ENCODE measurements at regions of chr1 and their contacts with region 1.

Region 1: DNA sequence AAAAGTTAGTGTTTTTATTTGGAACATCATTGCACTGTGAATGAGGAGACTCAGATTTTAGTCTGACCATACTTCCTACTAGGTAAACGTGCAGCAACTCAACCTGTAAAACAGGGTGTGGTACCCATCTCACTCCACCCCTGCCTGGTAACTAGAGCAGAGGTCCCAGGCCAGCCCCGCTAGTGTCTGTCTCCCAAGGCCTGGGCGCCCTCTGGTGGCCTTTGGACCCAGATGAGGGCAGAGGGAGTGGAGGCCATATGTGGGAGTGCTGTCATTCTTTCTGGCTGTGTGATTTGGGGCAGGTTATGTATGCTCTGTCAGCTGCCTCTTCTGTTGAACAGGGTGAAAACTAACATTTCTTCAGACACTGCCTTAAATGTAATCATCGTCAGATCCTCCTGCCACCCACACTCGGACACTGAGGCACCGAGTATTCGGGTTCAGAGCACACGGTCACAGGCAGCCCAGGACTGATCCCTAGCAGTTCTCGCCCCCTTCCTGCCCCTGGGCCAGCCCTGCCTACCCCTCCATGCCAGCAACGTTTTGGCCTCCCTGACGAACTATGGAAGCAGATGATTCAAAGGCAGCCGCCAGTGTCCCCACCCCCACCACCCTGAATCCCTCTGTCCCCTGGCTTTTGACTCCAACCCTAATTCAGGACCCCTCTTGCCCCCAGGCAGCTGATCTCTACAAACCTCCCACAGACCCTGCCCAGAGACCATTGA is 76.0 kb downstream of the CD247 start:
- DNase-seq: peak; percentile 85 to 91
- ATAC-seq: peak; percentile 96 to 98 (median 97)
- H3K4me3 ChIP-seq: no peak overlapping the region
- H3K27ac ChIP-seq: no peak overlapping the region
- H3K4me1 ChIP-seq: peaks cover 6% of the 10 kb centered on the region
- H3K27me3 ChIP-seq: peaks cover 0 to 6% (median 3%) of the 10 kb centered on the region in 3 donors
- CTCF ChIP-seq: peak; percentile 88

Region 2: DNA sequence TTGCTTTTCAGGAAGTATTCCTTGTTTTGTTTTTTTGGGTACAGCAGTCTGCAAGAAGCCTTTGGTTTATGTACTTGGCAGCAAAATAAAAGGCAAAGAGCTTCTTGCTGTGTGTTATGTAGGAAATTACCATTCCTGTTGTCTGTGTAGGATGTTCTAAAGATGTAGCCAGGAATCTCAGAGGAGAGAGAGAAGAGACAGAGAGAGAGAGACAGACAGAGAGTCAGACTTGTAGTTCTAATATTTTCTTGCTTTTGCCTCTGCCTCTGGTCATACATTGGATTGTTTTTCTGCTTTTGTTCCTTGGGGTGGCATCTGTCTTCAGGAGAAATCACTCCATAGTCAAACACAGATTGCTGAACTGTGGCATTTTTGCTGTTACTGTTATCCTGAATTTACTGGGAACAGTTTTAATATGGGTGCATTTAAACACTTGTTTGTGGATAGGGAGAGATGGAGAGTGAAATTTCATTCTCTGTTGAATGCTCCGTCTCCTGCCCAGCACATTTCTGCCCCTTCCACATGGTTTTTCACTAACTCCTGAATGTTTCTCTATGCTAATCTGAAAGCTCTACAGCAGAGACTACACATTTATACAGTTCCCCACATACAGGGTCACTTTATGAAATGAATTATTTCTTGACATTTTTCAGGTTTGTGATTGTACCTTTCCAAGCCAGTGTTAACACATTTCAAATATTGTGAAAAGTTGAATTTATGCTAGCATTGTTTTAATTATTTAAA is 171.8 kb before region 1 on chr1:
- intact Hi-C with region 1: loop called (anchors 1 to 2 kb)
- DNase-seq: no peak
- ATAC-seq: no peak
- H3K4me3 ChIP-seq: no peak overlapping the region
- H3K27ac ChIP-seq: no peak overlapping the region
- H3K4me1 ChIP-seq: peaks cover 45% of the 10 kb centered on the region
- H3K27me3 ChIP-seq: no peaks in the 10 kb centered on the region
- CTCF ChIP-seq: no peak

Region 3: GRCh38 chr1:167401260-167401873 is 40.9 kb before region 1 on chr1:
- intact Hi-C with region 1: loop called in 1 of 2 experiments (anchors 5 kb)
- DNase-seq: no peak
- ATAC-seq: peak; percentile 57 to 77 (median 70)
- H3K4me3 ChIP-seq: no peak overlapping the region
- H3K27ac ChIP-seq: no peak overlapping the region
- H3K4me1 ChIP-seq: no peaks in the 10 kb centered on the region
- H3K27me3 ChIP-seq: no peaks in the 10 kb centered on the region
- CTCF ChIP-seq: peak; percentile 56

Region 4: DNA sequence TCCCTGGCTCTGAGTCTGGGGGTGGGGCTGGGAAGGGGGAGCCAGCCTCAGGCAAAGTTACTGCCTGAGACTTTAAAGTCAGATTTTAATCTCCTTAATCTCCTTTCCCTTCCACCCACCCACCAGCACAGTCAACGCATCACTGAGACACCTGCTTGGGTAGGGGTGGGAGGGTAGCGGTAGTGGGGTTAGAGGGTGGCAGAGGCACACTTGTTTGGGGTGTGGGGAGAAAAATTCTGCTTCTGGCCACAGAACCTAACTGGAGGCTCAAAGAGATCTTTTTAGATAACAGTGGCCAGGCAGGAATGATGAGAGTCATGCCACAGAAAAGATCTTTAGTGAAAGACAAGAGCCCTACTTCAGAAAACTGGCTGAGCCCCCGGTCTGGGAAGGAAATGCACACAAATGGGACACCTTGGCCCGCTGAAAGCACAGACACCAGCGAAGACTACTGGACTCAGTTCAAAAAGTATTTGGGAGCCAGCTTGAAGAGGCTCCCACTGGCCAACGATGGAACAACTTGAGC is 32.0 kb after region 1 on chr1:
- intact Hi-C with region 1: no loop called
- DNase-seq: no peak
- ATAC-seq: no peak
- H3K4me3 ChIP-seq: no peak overlapping the region
- H3K27ac ChIP-seq: no peak overlapping the region
- H3K4me1 ChIP-seq: no peaks in the 10 kb centered on the region
- H3K27me3 ChIP-seq: no peaks in the 10 kb centered on the region
- CTCF ChIP-seq: no peak